Common myeloid progenitor, CD34-positive (primary cell): ENCODE measurements at regions of chr19 and their contacts with region 1.

Region 1: GRCh38 chr19:40603389-40604135 is 2.4 kb downstream of the LTBP4 start:
- DNase-seq: peak; percentile 96 to 98 (median 98)
- H3K4me3 ChIP-seq: peak overlapping the region; percentile 30 to 81 (median 56)
- H3K27ac ChIP-seq: peak overlapping the region in 1 of 2 experiments; percentile 66
- H3K4me1 ChIP-seq: peaks cover 0 to 79% (median 71%) of the 10 kb centered on the region in 4 experiments
- H3K27me3 ChIP-seq: peaks cover 0 to 37% (median 24%) of the 10 kb centered on the region in 5 experiments

Region 2: DNA sequence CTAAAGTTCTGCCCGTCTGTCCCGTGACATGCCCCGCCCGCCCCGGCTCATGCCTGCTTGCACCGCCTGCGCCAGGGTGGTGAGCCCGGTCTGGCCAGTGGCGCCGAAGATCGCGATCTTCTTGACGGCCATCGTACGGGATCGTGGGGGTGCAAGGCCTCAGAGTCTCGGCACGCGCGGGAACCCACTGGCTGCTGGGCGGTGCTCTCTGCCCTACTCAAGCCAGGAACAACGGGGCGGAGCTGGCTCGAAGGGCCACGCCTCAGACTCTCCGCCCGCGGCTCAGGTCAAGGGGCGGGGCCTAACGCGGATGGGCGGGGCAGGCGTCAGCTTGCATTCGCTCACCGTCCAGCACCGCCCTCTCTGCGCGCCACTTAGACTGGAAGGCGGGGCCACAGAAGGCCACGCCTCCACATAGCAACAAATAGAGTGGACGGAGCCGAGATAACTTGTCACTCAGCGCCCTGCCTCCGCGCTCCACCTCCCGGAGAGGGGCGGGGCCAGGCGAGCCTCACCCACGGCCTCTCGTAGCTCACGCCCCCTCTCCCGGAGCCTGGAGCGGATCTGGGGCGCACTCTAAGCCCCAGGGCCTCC is 137.9 kb before region 1 on chr19 and contains the start of gene BLVRB:
- CTCF ChIA-PET with region 1: interaction called, 10 read pairs
- POLR2A ChIA-PET with region 1: no interaction called
- DNase-seq: peak; percentile 99
- H3K4me3 ChIP-seq: peak within 1 kb of the TSS; percentile 38 to 81 (median 73)
- H3K27ac ChIP-seq: peak within 1 kb of the TSS in 1 of 2 experiments; percentile 80
- H3K4me1 ChIP-seq: peaks cover 5 to 36% (median 28%) of the 10 kb centered on the region in 4 experiments
- H3K27me3 ChIP-seq: peaks cover 0 to 27% (median 12%) of the 10 kb centered on the region in 5 experiments

Region 3: GRCh38 chr19:40549007-40549708 is 54.4 kb before region 1 on chr19:
- CTCF ChIA-PET with region 1: interaction called, 57 read pairs
- POLR2A ChIA-PET with region 1: no interaction called
- DNase-seq: peak; percentile 86 to 88 (median 88)
- H3K4me3 ChIP-seq: peak overlapping the region in 1 of 7 experiments; percentile 23
- H3K27ac ChIP-seq: no peak overlapping the region
- H3K4me1 ChIP-seq: peaks cover 0 to 7% (median 4%) of the 10 kb centered on the region in 4 experiments
- H3K27me3 ChIP-seq: peaks cover 2 to 33% (median 14%) of the 10 kb centered on the region in 5 experiments

Region 4: GRCh38 chr19:40570313-40571004 is 33.1 kb before region 1 on chr19:
- CTCF ChIA-PET with region 1: interaction called, 11 read pairs
- POLR2A ChIA-PET with region 1: interaction called, 3 read pairs
- DNase-seq: peak; percentile 99 to 100 (median 100)
- H3K4me3 ChIP-seq: peak overlapping the region in 6 of 7 experiments; percentile 10 to 73 (median 52)
- H3K27ac ChIP-seq: no peak overlapping the region
- H3K4me1 ChIP-seq: peaks cover 0 to 12% (median 8%) of the 10 kb centered on the region in 4 experiments
- H3K27me3 ChIP-seq: peaks cover 0 to 42% (median 12%) of the 10 kb centered on the region in 5 experiments

Region 5: DNA sequence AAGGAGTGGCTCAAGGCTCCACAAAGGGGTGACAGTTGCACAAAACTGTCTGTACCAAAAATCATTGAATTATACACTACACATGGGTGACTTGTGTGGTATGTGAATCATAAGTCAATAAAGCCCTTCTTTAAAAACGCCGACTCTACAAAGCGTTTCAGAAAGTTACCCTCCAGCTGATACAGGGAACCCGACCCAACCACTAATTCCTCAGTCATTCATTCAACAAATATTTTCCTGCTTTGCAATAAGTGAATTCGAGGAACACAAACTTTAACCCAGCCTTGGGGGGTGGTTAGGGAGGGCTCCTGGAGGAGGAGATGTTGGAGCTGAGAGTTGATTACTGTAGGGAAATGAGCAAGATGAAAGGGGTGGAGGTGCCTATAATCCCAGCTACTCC is 29.6 kb after region 1 on chr19:
- CTCF ChIA-PET with region 1: interaction called, 24 read pairs
- POLR2A ChIA-PET with region 1: no interaction called
- DNase-seq: no peak
- H3K4me3 ChIP-seq: peak overlapping the region in 1 of 7 experiments; percentile 19
- H3K27ac ChIP-seq: no peak overlapping the region
- H3K4me1 ChIP-seq: peaks cover 0 to 3% (median 3%) of the 10 kb centered on the region in 4 experiments
- H3K27me3 ChIP-seq: peaks cover 0 to 5% (median 0%) of the 10 kb centered on the region in 5 experiments